HAP-1 (cell line): ENCODE measurements at regions of chr11 and their contacts with region 1.

Region 1: GRCh38 chr11:250740-251299 is 14.0 kb downstream of the PSMD13 start:
- DNase-seq: peak; percentile 22 to 77
- H3K4me3 ChIP-seq: no peak overlapping the region
- H3K4me1 ChIP-seq: peaks cover 8% of the 10 kb centered on the region; the same call in 1 of the 2 replicates
- H3K27me3 ChIP-seq: no peaks in the 10 kb centered on the region

Region 2: GRCh38 chr11:363948-364761 is 113.3 kb after region 1 on chr11:
- in situ Hi-C with region 1: loop called (anchors 10 kb)
- DNase-seq: no peak
- H3K4me3 ChIP-seq: no peak overlapping the region
- H3K4me1 ChIP-seq: peaks cover 3% of the 10 kb centered on the region; the same call in 1 of the 2 replicates
- H3K27me3 ChIP-seq: no peaks in the 10 kb centered on the region